Panc1 (cell line): ENCODE measurements at regions of chr19 and their contacts with region 1.

Region 1: GRCh38 chr19:50313812-50314536 is 15.2 kb downstream of the KCNC3 start:
- DNase-seq: no peak
- ATAC-seq: no peak
- H3K4me3 ChIP-seq: no peak overlapping the region
- H3K27ac ChIP-seq: no peak overlapping the region
- H3K4me1 ChIP-seq: peaks cover 4% of the 10 kb centered on the region; the same call in 1 of the 2 replicates
- H3K27me3 ChIP-seq: no peaks in the 10 kb centered on the region
- CTCF ChIP-seq: no peak

Region 2: GRCh38 chr19:50273821-50274220 is 40.2 kb before region 1 on chr19:
- CTCF ChIA-PET with region 1: no interaction called
- POLR2A ChIA-PET with region 1: interaction called, 13 read pairs
- in situ Hi-C with region 1: no loop called
- intact Hi-C with region 1: no loop called
- DNase-seq: no peak
- ATAC-seq: no peak
- H3K4me3 ChIP-seq: no peak overlapping the region
- H3K27ac ChIP-seq: no peak overlapping the region
- H3K4me1 ChIP-seq: no peaks in the 10 kb centered on the region
- H3K27me3 ChIP-seq: no peaks in the 10 kb centered on the region
- CTCF ChIP-seq: no peak

Region 3: GRCh38 chr19:50341091-50341564 is 27.2 kb after region 1 on chr19:
- CTCF ChIA-PET with region 1: no interaction called
- POLR2A ChIA-PET with region 1: no interaction called
- in situ Hi-C with region 1: no loop called
- intact Hi-C with region 1: no loop called
- DNase-seq: no peak
- ATAC-seq: no peak
- H3K4me3 ChIP-seq: no peak overlapping the region
- H3K27ac ChIP-seq: no peak overlapping the region
- H3K4me1 ChIP-seq: no peaks in the 10 kb centered on the region
- H3K27me3 ChIP-seq: no peaks in the 10 kb centered on the region
- CTCF ChIP-seq: no peak